HCT116 (cell line): ENCODE measurements at regions of chr6 and their contacts with region 1.

Region 1: GRCh38 chr6:135922174-135922573 is 70.7 kb downstream of the PDE7B start:
- DNase-seq: peak; percentile 29
- ATAC-seq: peak; percentile 66
- H3K4me3 ChIP-seq: no peak overlapping the region
- H3K27ac ChIP-seq: no peak overlapping the region
- H3K4me1 ChIP-seq: peaks cover 8 to 11% of the 10 kb centered on the region in 2 experiments
- H3K27me3 ChIP-seq: no peaks in the 10 kb centered on the region
- CTCF ChIP-seq: no peak
- POLR2A ChIP-seq: no peak
- RAD21 ChIP-seq: no peak

Region 2: DNA sequence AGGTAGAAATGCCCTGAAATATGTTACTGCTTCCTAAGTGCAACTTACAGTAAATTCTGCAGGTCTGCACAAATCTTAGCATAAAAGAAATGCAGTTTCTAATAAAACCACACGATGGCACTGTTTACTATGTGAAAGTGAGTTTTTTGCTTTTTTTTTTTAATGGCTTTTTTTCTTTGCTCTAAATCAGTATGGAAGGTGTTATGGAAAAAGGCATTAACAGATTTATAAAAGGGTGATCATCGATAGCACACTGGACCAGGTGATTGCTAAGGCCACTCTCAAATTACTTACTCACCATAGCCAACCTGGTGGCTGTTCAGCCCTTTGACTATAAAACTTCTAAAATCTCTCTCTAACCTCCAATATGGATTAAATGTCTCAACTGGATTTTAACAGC is 470.5 kb before region 1 on chr6:
- CTCF ChIA-PET with region 1: no interaction called
- POLR2A ChIA-PET with region 1: no interaction called
- RAD21 ChIA-PET with region 1: no interaction called
- intact Hi-C with region 1: loop called (anchors 10 kb)
- DNase-seq: peak; percentile 22
- ATAC-seq: no peak
- H3K4me3 ChIP-seq: no peak overlapping the region
- H3K27ac ChIP-seq: no peak overlapping the region
- H3K4me1 ChIP-seq: no peaks in the 10 kb centered on the region
- H3K27me3 ChIP-seq: no peaks in the 10 kb centered on the region
- CTCF ChIP-seq: peak; percentile 34 to 69 (median 43); a peak in 5 of 6 replicates
- POLR2A ChIP-seq: no peak
- RAD21 ChIP-seq: peak; percentile 63

Region 3: GRCh38 chr6:135651964-135652755 is 270.0 kb before region 1 on chr6:
- CTCF ChIA-PET with region 1: no interaction called
- POLR2A ChIA-PET with region 1: no interaction called
- RAD21 ChIA-PET with region 1: no interaction called
- intact Hi-C with region 1: no loop called
- DNase-seq: no peak
- ATAC-seq: no peak
- H3K4me3 ChIP-seq: no peak overlapping the region
- H3K27ac ChIP-seq: no peak overlapping the region
- H3K4me1 ChIP-seq: no peaks in the 10 kb centered on the region
- H3K27me3 ChIP-seq: no peaks in the 10 kb centered on the region
- CTCF ChIP-seq: no peak
- POLR2A ChIP-seq: no peak
- RAD21 ChIP-seq: no peak

Region 4: GRCh38 chr6:135784507-135784906 is 137.7 kb before region 1 on chr6:
- CTCF ChIA-PET with region 1: no interaction called
- POLR2A ChIA-PET with region 1: no interaction called
- RAD21 ChIA-PET with region 1: no interaction called
- intact Hi-C with region 1: no loop called
- DNase-seq: no peak
- ATAC-seq: no peak
- H3K4me3 ChIP-seq: no peak overlapping the region
- H3K27ac ChIP-seq: no peak overlapping the region
- H3K4me1 ChIP-seq: no peaks in the 10 kb centered on the region
- H3K27me3 ChIP-seq: no peaks in the 10 kb centered on the region
- CTCF ChIP-seq: no peak
- POLR2A ChIP-seq: no peak
- RAD21 ChIP-seq: no peak

Region 5: DNA sequence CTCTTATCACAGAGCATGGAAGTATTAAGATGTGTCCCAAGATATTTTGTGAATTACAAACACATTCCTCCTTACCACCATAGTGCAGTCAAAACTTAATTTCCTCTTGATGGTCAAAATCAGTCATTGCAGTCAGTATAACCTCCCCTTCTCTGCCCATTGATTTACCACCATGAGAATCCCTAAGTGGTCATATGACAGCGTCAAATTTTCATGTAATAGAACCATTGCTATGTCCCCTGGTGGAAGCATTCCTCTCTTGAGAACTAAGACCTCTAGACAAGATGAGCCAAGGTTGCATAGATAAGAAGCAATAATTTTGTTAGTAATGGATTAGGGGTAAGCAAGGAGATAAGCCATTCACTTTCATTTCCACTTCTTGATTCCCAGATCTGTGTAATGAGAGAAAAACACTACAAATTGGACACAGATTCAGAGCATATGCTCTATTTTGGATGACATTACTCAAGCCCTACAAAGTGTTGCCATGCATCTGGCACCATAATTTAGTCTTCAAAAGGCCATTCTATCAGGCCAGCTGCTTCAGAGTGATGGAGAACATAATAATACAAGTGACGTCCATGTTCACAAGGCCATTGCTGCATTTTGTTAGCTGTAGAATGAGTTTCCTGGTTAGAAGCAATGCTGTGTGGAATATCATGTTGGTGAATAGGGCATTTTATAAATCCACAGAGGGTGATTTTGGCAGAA is 120.3 kb before region 1 on chr6:
- CTCF ChIA-PET with region 1: no interaction called
- POLR2A ChIA-PET with region 1: no interaction called
- RAD21 ChIA-PET with region 1: no interaction called
- intact Hi-C with region 1: no loop called
- DNase-seq: no peak
- ATAC-seq: no peak
- H3K4me3 ChIP-seq: no peak overlapping the region
- H3K27ac ChIP-seq: no peak overlapping the region
- H3K4me1 ChIP-seq: no peaks in the 10 kb centered on the region; a peak in 1 of 4 replicates
- H3K27me3 ChIP-seq: no peaks in the 10 kb centered on the region
- CTCF ChIP-seq: no peak
- POLR2A ChIP-seq: no peak
- RAD21 ChIP-seq: no peak

Region 6: DNA sequence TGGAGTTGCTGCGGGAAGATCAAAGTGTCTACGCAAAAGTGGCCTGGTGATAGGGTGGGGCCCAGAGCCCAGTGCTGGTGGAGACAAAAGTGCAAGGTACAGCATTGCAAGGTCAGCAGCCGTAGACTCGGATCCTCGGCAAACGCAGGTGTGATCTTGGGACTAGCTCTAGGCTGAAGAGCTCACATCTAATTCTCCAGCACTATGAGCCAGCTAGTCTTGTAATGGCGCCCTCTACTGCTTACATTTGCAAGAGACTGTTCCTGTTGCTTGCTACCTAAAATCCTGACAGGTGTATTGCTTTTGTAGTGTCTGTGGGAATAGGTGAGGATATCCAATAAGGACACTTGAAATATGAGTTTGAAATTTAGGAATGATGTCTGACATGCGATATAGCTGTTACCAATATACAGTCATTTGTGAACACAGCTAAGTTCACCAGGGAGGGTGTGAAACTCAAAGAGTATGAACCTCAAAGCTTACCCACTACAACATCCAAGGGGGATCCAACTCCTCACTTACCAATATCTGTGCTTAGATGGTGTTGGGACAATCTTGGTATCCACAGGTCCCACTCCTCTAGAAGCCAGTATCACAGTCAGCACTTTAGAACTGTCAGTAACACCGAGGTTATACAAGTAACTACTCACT is 12.3 kb before region 1 on chr6:
- CTCF ChIA-PET with region 1: interaction called, 15 read pairs
- POLR2A ChIA-PET with region 1: no interaction called
- RAD21 ChIA-PET with region 1: no interaction called
- intact Hi-C with region 1: no loop called
- DNase-seq: peak; percentile 76
- ATAC-seq: peak; percentile 99
- H3K4me3 ChIP-seq: no peak overlapping the region
- H3K27ac ChIP-seq: no peak overlapping the region
- H3K4me1 ChIP-seq: peaks cover 0 to 1% of the 10 kb centered on the region in 2 experiments; a peak in 2 of 4 replicates
- H3K27me3 ChIP-seq: no peaks in the 10 kb centered on the region
- CTCF ChIP-seq: peak; percentile 59 to 85 (median 73)
- POLR2A ChIP-seq: no peak
- RAD21 ChIP-seq: peak; percentile 72